T-cell (primary cell): ENCODE measurements at regions of chr19 and their contacts with region 1.

Region 1: DNA sequence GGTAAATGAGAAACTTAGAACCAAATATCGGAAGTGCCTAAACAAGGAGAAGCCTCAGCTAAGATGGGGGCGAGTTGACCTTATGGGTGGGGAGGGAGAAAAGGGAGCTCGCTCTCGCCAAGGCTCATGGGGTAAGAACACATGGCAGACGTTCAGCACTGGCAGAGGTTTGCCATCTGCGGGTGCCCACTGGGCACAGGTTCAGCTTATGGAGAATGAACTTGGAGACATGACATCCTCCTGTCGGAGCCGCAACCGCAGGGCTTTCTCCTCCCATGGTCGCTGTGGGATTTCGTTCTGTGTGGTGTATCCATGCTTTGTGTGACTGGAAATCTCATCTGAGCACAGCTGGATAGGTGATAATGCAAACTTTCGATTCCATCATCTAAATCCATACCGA is 36.1 kb upstream of the PEPD start:
- DNase-seq: peak in 1 of 35 experiments; percentile 9
- ATAC-seq: no peak
- H3K4me3 ChIP-seq: no peak overlapping the region
- H3K4me3 Mint-ChIP-seq: no peak overlapping the region
- H3K27ac ChIP-seq: no peak overlapping the region
- H3K27ac Mint-ChIP-seq: no peak overlapping the region
- H3K4me1 ChIP-seq: no peaks in the 10 kb centered on the region
- H3K4me1 Mint-ChIP-seq: no peaks in the 10 kb centered on the region
- H3K27me3 ChIP-seq: peaks cover 0 to 17% of the 10 kb centered on the region in 2 experiments
- H3K27me3 Mint-ChIP-seq: peaks cover 4 to 15% of the 10 kb centered on the region in 2 donors

Region 2: DNA sequence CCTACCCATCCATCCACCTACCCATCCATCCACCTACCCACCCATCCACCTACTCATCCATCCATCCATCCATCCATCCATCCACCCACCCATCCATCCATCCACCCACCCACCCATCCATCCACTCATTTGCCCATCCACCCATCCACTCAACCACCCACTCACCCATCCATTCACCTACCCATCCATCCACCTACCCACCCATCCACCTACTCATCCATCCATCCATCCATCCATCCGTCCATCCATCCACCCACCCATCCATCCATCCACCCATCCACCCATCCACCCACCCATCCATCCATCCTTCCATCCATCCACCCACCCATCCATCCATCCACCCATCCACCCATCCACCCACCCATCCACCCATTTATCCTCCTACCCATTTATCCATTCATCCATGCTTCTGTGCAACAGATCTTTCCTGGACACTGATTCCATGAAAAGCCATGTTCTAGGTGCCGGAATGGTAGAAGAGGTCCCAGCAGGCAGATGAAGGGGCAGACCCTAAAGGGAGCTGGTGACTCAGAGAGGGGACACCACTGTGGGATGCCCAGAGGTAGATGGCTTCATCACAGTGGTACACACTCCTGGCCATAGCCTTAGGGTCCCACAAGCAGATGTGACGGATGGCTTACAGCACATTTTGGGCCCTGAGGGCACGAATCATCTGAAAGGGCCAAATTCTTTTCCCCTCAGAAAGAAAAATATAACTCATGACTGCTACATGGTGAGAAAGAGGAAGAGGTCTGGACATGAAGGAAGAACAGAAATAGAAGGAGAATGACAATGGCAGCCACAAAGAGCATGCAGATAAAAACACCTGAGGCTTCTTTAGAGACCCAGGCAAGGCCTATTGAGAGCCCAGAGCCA is 315.0 kb after region 1 on chr19:
- CTCF ChIA-PET with region 1: no interaction called
- POLR2A ChIA-PET with region 1: interaction called in 1 of 2 experiments, 11 read pairs
- DNase-seq: no peak
- ATAC-seq: no peak
- H3K4me3 ChIP-seq: no peak overlapping the region
- H3K4me3 Mint-ChIP-seq: no peak overlapping the region
- H3K27ac ChIP-seq: no peak overlapping the region
- H3K27ac Mint-ChIP-seq: no peak overlapping the region
- H3K4me1 ChIP-seq: no peaks in the 10 kb centered on the region
- H3K4me1 Mint-ChIP-seq: no peaks in the 10 kb centered on the region
- H3K27me3 ChIP-seq: peaks cover 0 to 11% of the 10 kb centered on the region in 2 experiments
- H3K27me3 Mint-ChIP-seq: peaks cover 3 to 20% of the 10 kb centered on the region in 2 donors